Caco-2 (cell line): ENCODE measurements at regions of chr18 and their contacts with region 1.

Region 1: GRCh38 chr18:3703732-3704176 is 253.8 kb downstream of the TGIF1 start:
- DNase-seq: peak; percentile 67 to 76
- H3K4me3 ChIP-seq: no peak overlapping the region
- H3K4me3 Mint-ChIP-seq: no peak overlapping the region
- H3K27ac Mint-ChIP-seq: no peak overlapping the region
- H3K4me1 ChIP-seq: no peaks in the 10 kb centered on the region
- H3K4me1 Mint-ChIP-seq: peaks cover 17% of the 10 kb centered on the region
- H3K27me3 ChIP-seq: no peaks in the 10 kb centered on the region
- H3K27me3 Mint-ChIP-seq: no peaks in the 10 kb centered on the region
- CTCF ChIP-seq: peak; percentile 81 to 88

Region 2: GRCh38 chr18:3631887-3632286 is 71.9 kb before region 1 on chr18:
- CTCF ChIA-PET with region 1: no interaction called
- POLR2A ChIA-PET with region 1: no interaction called
- intact Hi-C with region 1: no loop called
- DNase-seq: no peak
- H3K4me3 ChIP-seq: no peak overlapping the region
- H3K4me3 Mint-ChIP-seq: no peak overlapping the region
- H3K27ac Mint-ChIP-seq: no peak overlapping the region
- H3K4me1 ChIP-seq: peaks cover 29% of the 10 kb centered on the region
- H3K4me1 Mint-ChIP-seq: peaks cover 13% of the 10 kb centered on the region
- H3K27me3 ChIP-seq: no peaks in the 10 kb centered on the region
- H3K27me3 Mint-ChIP-seq: no peaks in the 10 kb centered on the region
- CTCF ChIP-seq: no peak

Region 3: GRCh38 chr18:3747176-3747973 is 43.6 kb after region 1 on chr18:
- CTCF ChIA-PET with region 1: no interaction called
- POLR2A ChIA-PET with region 1: no interaction called
- intact Hi-C with region 1: no loop called
- DNase-seq: no peak
- H3K4me3 ChIP-seq: no peak overlapping the region
- H3K4me3 Mint-ChIP-seq: no peak overlapping the region
- H3K27ac Mint-ChIP-seq: no peak overlapping the region
- H3K4me1 ChIP-seq: no peaks in the 10 kb centered on the region
- H3K4me1 Mint-ChIP-seq: no peaks in the 10 kb centered on the region
- H3K27me3 ChIP-seq: no peaks in the 10 kb centered on the region
- H3K27me3 Mint-ChIP-seq: peaks cover 3% of the 10 kb centered on the region
- CTCF ChIP-seq: no peak

Region 4: GRCh38 chr18:3852321-3852720 is 148.6 kb after region 1 on chr18:
- CTCF ChIA-PET with region 1: no interaction called
- POLR2A ChIA-PET with region 1: no interaction called
- intact Hi-C with region 1: loop called (anchors 1 kb)
- DNase-seq: peak in 1 of 2 experiments; percentile 19
- H3K4me3 ChIP-seq: no peak overlapping the region
- H3K4me3 Mint-ChIP-seq: no peak overlapping the region
- H3K27ac Mint-ChIP-seq: no peak overlapping the region
- H3K4me1 ChIP-seq: no peaks in the 10 kb centered on the region
- H3K4me1 Mint-ChIP-seq: no peaks in the 10 kb centered on the region
- H3K27me3 ChIP-seq: no peaks in the 10 kb centered on the region
- H3K27me3 Mint-ChIP-seq: peaks cover under 1% of the 10 kb centered on the region
- CTCF ChIP-seq: peak in 1 of 2 experiments; percentile 25

Region 5: GRCh38 chr18:3869848-3870247 is 166.1 kb after region 1 on chr18:
- CTCF ChIA-PET with region 1: interaction called, 13 read pairs
- POLR2A ChIA-PET with region 1: no interaction called
- intact Hi-C with region 1: loop called (anchors 1 kb)
- DNase-seq: peak in 1 of 2 experiments; percentile 46
- H3K4me3 ChIP-seq: no peak overlapping the region
- H3K4me3 Mint-ChIP-seq: no peak overlapping the region
- H3K27ac Mint-ChIP-seq: no peak overlapping the region
- H3K4me1 ChIP-seq: no peaks in the 10 kb centered on the region
- H3K4me1 Mint-ChIP-seq: peaks cover 7% of the 10 kb centered on the region
- H3K27me3 ChIP-seq: no peaks in the 10 kb centered on the region; the same call in 1 of the 2 replicates
- H3K27me3 Mint-ChIP-seq: peaks cover 27% of the 10 kb centered on the region
- CTCF ChIP-seq: peak; percentile 42 to 49

Region 6: GRCh38 chr18:4068552-4069158 is 364.9 kb after region 1 on chr18:
- CTCF ChIA-PET with region 1: no interaction called
- POLR2A ChIA-PET with region 1: no interaction called
- intact Hi-C with region 1: loop called (anchors 10 kb)
- DNase-seq: peak; percentile 49 to 69
- H3K4me3 ChIP-seq: no peak overlapping the region
- H3K4me3 Mint-ChIP-seq: no peak overlapping the region
- H3K27ac Mint-ChIP-seq: no peak overlapping the region
- H3K4me1 ChIP-seq: no peaks in the 10 kb centered on the region
- H3K4me1 Mint-ChIP-seq: no peaks in the 10 kb centered on the region
- H3K27me3 ChIP-seq: no peaks in the 10 kb centered on the region
- H3K27me3 Mint-ChIP-seq: peaks cover 7% of the 10 kb centered on the region
- CTCF ChIP-seq: peak; percentile 73